Activated B cell treated with CpG ODN at 0.5 μM for 24 hours (primary cell): ENCODE measurements at regions of chr2 and their contacts with region 1.

Region 1: GRCh38 chr2:210445116-210445707 is 31.3 kb downstream of the LANCL1 start:
- DNase-seq: no peak
- ATAC-seq: peak; percentile 25
- H3K4me3 Mint-ChIP-seq: no peak overlapping the region
- H3K27ac Mint-ChIP-seq: no peak overlapping the region
- H3K4me1 Mint-ChIP-seq: peaks cover 22% of the 10 kb centered on the region
- H3K27me3 Mint-ChIP-seq: no peaks in the 10 kb centered on the region
- CTCF ChIP-seq: no peak

Region 2: DNA sequence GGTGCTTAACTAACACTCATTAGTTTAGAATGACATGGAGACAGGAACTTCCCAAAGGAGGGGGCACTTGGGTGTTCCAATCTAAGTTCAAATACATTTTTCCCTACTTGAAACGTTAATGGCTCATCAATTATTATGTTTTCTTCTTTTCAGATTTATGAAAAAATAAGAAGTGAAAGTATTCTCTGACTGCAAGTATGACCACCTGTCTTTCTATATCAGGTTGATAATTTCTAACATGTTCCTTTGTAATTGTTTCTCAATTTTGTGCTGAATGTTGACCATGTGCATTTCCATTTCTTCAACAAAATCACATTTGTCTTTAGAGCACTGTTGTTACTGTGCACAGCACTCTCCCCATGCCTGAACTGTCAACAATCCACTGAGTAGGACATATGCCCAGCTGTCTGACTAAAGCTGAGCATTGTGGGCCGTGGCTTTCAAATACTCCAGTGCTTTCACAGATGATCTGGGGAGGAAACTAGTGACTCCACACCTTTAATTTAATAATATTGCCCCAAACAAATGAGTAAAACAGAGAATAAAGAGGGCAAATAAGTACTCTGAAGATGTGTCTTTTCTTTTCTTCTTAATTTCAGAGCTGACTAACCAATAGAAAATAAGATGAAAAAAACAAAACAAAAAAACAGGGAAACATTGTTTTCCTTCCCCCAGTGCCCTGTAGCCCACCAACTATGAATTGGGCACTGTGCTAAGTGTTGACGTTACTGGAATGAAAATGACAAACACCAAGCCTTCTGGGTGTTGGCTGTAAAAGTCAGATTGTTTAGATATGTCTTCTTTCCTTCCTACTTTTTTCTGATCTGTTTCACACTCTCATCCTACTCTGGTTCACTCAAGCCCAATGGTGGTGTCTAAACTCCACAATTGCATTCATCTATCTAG is 15.4 kb after region 1 on chr2:
- CTCF ChIA-PET with region 1: interaction called, 5 read pairs
- POLR2A ChIA-PET with region 1: no interaction called
- intact Hi-C with region 1: loop called (anchors 1 kb)
- DNase-seq: no peak
- ATAC-seq: peak; percentile 20
- H3K4me3 Mint-ChIP-seq: peak overlapping the region; percentile 61
- H3K27ac Mint-ChIP-seq: peak overlapping the region; percentile 87
- H3K4me1 Mint-ChIP-seq: peaks cover 68% of the 10 kb centered on the region
- H3K27me3 Mint-ChIP-seq: no peaks in the 10 kb centered on the region
- CTCF ChIP-seq: no peak

Region 3: DNA sequence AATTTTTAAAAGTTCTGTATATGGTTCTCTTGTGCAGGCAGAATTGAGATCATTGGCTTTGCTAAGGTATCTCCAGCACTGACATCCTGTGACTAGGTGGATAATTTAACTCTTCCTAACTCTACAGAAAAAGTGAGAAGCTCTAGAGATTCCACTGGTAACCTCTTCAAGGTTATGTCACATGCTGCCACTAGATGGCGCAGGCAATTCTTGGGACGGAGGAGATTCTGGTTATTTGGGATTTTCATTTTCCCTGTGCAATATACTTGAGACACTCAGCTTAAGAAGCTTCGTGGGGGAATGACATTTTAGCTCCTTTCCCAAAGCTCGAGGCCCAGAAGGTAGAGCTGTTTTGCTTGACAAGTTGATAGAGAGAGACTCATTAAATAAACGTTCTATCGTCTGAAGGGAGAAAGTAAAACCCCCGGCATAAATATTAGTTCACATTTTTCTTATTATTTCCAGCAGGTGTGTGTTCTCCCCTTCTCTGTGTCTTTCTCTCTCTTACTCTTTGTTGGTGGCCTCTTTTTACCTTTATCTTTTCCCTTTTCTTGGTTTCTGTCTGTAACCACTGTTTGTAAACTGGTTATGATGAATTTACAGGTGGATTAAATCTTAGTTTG is 57.9 kb after region 1 on chr2:
- CTCF ChIA-PET with region 1: interaction called, 5 read pairs
- POLR2A ChIA-PET with region 1: no interaction called
- intact Hi-C with region 1: loop called (anchors 2 kb)
- DNase-seq: no peak
- ATAC-seq: peak; percentile 49
- H3K4me3 Mint-ChIP-seq: peak overlapping the region; percentile 63
- H3K27ac Mint-ChIP-seq: no peak overlapping the region
- H3K4me1 Mint-ChIP-seq: peaks cover 6% of the 10 kb centered on the region
- H3K27me3 Mint-ChIP-seq: peaks cover 22% of the 10 kb centered on the region
- CTCF ChIP-seq: peak; percentile 98

Region 4: DNA sequence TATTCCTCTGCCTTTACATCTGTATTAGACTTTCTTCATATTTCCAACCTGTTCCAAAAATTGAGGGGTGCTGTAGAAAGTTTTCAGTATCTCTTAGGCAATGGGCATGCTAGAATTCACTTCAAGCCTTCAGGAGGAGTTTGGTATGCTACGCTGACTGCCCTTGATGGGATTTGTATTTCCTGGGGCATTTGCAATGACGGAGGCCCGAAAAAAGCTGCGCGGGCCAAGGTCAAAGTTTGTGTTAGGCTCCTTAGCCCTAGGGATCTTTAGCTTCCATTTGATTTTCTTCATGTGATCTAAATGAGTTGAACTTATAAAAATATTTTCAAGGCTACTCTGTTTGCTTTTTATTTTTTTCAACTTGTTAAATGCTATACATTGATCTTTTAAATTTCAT is 116.3 kb after region 1 on chr2:
- CTCF ChIA-PET with region 1: no interaction called
- POLR2A ChIA-PET with region 1: no interaction called
- intact Hi-C with region 1: no loop called
- DNase-seq: no peak
- ATAC-seq: no peak
- H3K4me3 Mint-ChIP-seq: no peak overlapping the region
- H3K27ac Mint-ChIP-seq: no peak overlapping the region
- H3K4me1 Mint-ChIP-seq: no peaks in the 10 kb centered on the region
- H3K27me3 Mint-ChIP-seq: peaks cover 2% of the 10 kb centered on the region
- CTCF ChIP-seq: no peak

Region 5: DNA sequence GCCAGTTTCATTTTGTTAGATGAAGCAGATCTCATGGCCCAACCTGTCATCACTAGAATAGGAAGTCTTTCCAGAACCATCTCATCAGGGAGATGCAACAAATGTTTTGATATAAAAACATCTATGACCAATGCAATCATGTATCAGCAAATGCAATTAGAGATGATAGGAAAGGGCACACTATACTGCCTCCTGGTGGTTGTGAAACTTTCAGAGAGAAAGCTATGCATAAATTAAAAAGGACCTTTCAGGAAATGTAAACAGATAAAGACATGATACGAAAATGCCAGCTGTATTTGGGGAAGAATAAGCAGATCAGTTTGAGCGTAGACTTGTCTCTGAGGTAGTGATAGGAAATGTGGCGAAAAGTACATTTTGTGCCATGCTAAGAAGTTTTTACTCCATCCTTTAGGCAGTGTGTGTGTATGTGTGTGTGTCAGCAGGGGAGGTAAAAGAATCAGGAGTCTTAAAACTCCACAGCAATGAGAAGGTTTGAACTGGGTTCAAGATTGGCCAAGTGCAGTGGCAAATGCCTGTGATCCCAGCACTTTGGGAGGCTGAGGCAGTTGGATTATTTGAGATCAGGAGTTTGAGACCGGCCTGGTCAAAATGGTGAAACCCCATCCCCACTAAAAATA is 590.5 kb after region 1 on chr2:
- CTCF ChIA-PET with region 1: no interaction called
- POLR2A ChIA-PET with region 1: no interaction called
- intact Hi-C with region 1: loop called (anchors 1 kb)
- DNase-seq: no peak
- ATAC-seq: no peak
- H3K4me3 Mint-ChIP-seq: no peak overlapping the region
- H3K27ac Mint-ChIP-seq: no peak overlapping the region
- H3K4me1 Mint-ChIP-seq: no peaks in the 10 kb centered on the region
- H3K27me3 Mint-ChIP-seq: no peaks in the 10 kb centered on the region
- CTCF ChIP-seq: no peak

Region 6: GRCh38 chr2:211157856-211158463 is 712.7 kb after region 1 on chr2:
- CTCF ChIA-PET with region 1: interaction called, 3 read pairs
- POLR2A ChIA-PET with region 1: no interaction called
- intact Hi-C with region 1: loop called (anchors 1 kb)
- DNase-seq: peak; percentile 25
- ATAC-seq: peak; percentile 75
- H3K4me3 Mint-ChIP-seq: no peak overlapping the region
- H3K27ac Mint-ChIP-seq: no peak overlapping the region
- H3K4me1 Mint-ChIP-seq: no peaks in the 10 kb centered on the region
- H3K27me3 Mint-ChIP-seq: peaks cover 2% of the 10 kb centered on the region
- CTCF ChIP-seq: peak; percentile 82

Region 7: DNA sequence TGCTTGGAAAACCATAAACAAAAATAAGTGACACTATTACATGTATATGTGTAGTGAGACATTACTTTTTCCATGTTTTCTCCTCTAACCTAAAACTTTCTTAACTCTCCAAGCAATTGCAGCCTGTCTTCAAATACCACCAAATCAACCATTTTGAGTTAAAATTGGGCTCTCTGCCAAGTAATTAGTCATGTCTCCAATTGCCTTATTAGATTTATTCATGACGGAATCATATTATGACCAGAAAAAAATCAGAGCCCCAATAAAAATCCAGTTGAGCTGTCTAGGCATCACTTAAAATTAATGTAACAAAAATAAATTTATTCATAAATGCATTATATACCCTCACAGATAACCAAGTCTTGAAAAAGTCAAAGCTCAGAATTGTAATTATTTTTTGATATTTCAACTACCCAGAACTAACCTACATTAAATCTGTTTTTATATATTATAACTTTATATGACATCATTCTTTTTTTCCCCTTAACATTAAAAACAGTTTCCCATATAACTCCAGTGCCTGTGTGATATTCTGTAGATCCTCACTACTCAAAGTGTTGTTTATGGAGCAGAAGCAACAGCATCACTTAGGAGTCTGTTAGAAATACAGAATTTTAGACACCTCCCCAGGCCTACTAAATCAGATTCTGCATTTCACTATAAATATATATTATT is 1936.4 kb after region 1 on chr2:
- CTCF ChIA-PET with region 1: no interaction called
- POLR2A ChIA-PET with region 1: no interaction called
- intact Hi-C with region 1: no loop called
- DNase-seq: no peak
- ATAC-seq: no peak
- H3K4me3 Mint-ChIP-seq: no peak overlapping the region
- H3K27ac Mint-ChIP-seq: no peak overlapping the region
- H3K4me1 Mint-ChIP-seq: no peaks in the 10 kb centered on the region
- H3K27me3 Mint-ChIP-seq: no peaks in the 10 kb centered on the region
- CTCF ChIP-seq: no peak